Activated CD8-positive, alpha-beta T cell treated with anti-CD3 and anti-CD28 coated beads, Interleukin-2, amount 10 ng/mL, durations not matched to agents 7 days and 5 days (primary cell): ENCODE measurements at regions of chr19 and their contacts with region 1.

Region 1: GRCh38 chr19:7657131-7657751 is 11.6 kb upstream of the RETN start:
- DNase-seq: peak; percentile 58
- ATAC-seq: peak; percentile 58
- H3K4me3 Mint-ChIP-seq: peak overlapping the region; percentile 68
- H3K27ac Mint-ChIP-seq: peak overlapping the region; percentile 86
- H3K4me1 Mint-ChIP-seq: peaks cover 33% of the 10 kb centered on the region
- H3K27me3 Mint-ChIP-seq: peaks cover 2% of the 10 kb centered on the region

Region 2: DNA sequence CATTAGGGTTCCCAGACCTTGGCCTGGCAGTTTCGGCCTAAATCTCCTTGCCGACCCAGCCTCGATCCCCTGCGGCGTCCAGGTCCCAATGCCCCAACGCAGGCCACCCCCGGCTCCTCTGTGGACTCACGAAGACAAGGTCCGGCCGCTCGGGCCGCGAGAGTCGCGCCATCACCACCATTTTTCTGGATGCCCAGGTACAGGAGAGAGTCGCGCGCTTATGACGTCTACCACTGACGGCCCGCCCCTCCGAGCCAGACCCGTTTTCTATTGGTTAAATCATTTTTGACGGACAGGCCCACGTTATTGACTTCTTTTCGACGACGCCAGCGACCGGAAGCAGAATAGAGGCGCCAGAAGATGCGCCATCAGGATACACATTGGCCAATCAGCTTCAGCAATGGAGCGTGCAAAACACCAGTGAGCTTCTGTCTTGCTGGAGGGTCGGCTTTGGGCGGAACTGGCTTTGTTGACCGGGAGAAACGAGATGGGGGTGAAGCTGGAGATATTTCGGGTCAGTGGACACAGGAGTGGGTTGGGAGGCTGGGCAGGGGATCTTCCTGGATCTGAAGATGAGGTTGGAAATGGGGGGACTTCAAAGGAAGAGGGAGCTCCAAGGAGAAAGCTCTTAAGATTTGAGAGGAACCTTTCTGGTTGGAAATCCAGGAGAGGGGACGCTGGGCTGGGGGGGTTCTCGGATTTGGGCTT is 27.7 kb before region 1 on chr19 and contains the starts of genes PET100 and XAB2:
- CTCF ChIA-PET with region 1: interaction called, 13 read pairs
- POLR2A ChIA-PET with region 1: interaction called, 12 read pairs
- DNase-seq: peak; percentile 97
- ATAC-seq: peak; percentile 99
- H3K4me3 Mint-ChIP-seq: peak within 1 kb of the TSS; percentile 94
- H3K27ac Mint-ChIP-seq: peak within 1 kb of the TSS; percentile 98
- H3K4me1 Mint-ChIP-seq: peaks cover 35% of the 10 kb centered on the region
- H3K27me3 Mint-ChIP-seq: no peaks in the 10 kb centered on the region
- total RNA-seq, gene PET100: 125 to 136 TPM
- total RNA-seq, gene XAB2: 44.8 to 46.9 TPM